Vagina (tissue), 2 donors: ENCODE measurements at regions of chr7 and their contacts with region 1.

Region 1: DNA sequence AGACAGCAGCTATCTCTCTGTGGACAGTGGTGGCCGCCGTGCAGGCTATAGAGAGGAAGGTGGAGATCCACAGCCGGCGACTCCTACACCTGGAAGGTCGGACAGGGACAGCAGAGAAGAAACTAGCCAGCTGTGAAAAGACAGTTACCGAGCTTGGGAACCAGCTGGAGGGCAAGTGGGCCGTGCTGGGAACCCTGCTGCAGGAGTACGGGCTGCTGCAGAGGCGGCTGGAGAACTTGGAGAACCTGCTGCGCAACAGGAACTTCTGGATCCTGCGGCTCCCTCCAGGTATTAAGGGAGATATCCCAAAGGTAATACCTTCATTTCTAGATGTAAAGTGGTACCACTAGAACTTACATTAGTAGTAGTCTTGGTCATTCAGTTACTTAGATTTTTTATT is 6.8 kb downstream of the ZNF398 start:
- DNase-seq: no peak
- H3K4me3 ChIP-seq: no peak overlapping the region
- H3K27ac ChIP-seq: no peak overlapping the region
- H3K4me1 ChIP-seq: peaks cover 27% of the 10 kb centered on the region
- H3K27me3 ChIP-seq: no peaks in the 10 kb centered on the region
- CTCF ChIP-seq: no peak
- POLR2A ChIP-seq: no peak

Region 2: GRCh38 chr7:147423875-147424274 is 1730.2 kb before region 1 on chr7:
- intact Hi-C with region 1: loop called (anchors 10 kb)
- DNase-seq: no peak
- H3K4me3 ChIP-seq: no peak overlapping the region
- H3K27ac ChIP-seq: no peak overlapping the region
- H3K4me1 ChIP-seq: no peaks in the 10 kb centered on the region
- H3K27me3 ChIP-seq: no peaks in the 10 kb centered on the region
- CTCF ChIP-seq: no peak
- POLR2A ChIP-seq: no peak

Region 3: GRCh38 chr7:149090397-149091195 is 63.4 kb before region 1 on chr7 and contains the start of gene ZNF786:
- intact Hi-C with region 1: loop called (anchors 10 kb)
- DNase-seq: no peak
- H3K4me3 ChIP-seq: peak within 1 kb of the TSS; percentile 74 to 94
- H3K27ac ChIP-seq: peak within 1 kb of the TSS; percentile 98
- H3K4me1 ChIP-seq: peaks cover 15% of the 10 kb centered on the region
- H3K27me3 ChIP-seq: no peaks in the 10 kb centered on the region
- CTCF ChIP-seq: peak; percentile 87 to 95 (median 94)
- POLR2A ChIP-seq: peak in 1 of 2 donors; percentile 24
- total RNA-seq, gene ZNF786: 8.3 TPM